Activated CD4-positive, alpha-beta T cell treated with anti-CD3 and anti-CD28 coated beads, Interleukin-2, amount 10 ng/mL, durations not matched to agents 7 days and 5 days (primary cell): ENCODE measurements at regions of chr16 and their contacts with region 1.

Region 1: DNA sequence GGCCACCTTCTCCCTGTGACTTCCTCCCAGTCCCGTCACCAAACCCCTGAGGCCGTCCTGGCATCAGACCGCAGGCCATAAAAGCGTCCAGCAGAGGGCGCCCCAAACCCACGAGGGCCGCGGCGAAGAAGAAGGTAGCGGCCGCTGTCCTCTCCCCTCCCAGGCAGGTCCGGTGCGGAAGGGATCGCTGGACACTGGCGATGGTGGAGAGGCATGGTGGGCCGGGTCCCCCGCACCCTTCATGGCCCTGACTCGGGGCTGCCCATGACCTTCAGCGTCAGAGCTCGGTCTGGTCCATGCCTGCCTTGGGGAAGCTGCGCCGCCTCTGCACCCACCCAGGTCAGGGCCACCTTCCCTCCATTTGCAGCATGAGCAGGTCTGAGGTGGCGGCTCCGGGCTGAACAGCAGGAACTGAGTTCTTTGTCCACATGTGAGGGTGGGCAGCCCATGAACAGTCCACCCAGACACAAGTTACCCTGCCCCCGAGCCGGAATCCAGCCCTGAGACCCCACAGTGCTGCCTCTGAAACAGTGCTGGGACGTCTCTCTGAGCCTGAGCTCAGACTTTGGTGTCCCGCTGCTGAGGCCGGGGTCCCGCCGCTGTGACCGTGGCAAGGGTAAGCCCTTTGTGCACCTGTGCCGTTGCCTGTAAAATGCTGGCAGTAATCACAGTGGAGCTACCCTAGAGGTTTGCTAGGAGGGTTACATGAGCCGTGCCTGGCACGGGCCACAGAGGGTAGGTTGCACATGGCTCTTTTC is 40.8 kb upstream of the CMIP start:
- DNase-seq: peak; percentile 78
- H3K4me3 Mint-ChIP-seq: no peak overlapping the region
- H3K27ac Mint-ChIP-seq: no peak overlapping the region
- H3K4me1 Mint-ChIP-seq: peaks cover 5% of the 10 kb centered on the region
- H3K27me3 Mint-ChIP-seq: peaks cover 4% of the 10 kb centered on the region

Region 2: DNA sequence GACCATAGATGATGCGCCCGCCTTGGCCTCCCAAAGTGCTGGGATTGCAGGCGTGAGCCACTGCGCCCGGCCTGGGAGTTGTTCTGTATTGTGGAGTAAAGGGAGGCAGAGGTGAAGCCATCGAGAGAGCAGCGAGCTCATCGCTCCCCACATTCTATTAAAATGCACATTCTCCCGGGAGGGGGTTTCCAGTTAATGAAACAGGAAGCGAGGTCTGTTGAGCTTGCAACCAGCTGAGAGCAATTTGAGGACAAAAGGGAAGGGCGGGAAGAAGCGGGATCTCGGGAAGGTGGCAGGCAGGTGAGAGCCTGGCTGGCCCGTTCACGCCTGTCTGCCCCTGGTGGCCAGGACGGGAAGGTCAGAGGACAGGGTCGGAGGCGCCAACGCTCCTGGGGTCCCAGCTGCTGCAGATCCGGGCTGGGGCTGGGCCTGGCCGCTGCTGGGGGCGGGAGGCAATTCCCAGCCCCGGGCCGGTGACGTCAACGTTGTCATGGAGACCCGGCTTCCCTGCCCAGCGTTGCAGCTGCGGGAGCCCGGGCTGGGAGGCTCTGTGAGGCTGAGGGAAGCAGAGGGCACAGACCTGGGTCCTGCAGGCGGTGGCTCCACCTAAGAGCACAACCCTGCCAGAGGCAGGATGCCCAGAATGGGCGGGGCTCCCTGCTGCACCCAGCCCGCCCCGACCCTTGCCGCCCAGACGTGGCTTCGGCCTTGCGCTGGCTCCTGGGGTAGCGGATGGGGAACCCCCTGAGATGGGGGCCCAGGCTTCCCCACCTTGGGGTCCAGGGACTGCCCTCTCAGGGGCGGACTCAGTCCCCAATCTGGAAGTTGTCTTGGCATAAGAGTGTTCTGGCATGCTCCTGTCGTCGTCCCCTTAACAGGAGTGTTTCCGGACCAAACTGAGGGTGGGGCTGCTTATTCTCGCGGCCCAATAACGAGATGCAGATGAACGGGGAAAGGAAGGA is 326.6 kb after region 1 on chr16:
- CTCF ChIA-PET with region 1: interaction called, 10 read pairs
- POLR2A ChIA-PET with region 1: no interaction called
- DNase-seq: peak; percentile 52
- H3K4me3 Mint-ChIP-seq: peak overlapping the region; percentile 72
- H3K27ac Mint-ChIP-seq: peak overlapping the region; percentile 91
- H3K4me1 Mint-ChIP-seq: peaks cover 23% of the 10 kb centered on the region
- H3K27me3 Mint-ChIP-seq: peaks cover 2% of the 10 kb centered on the region